MCF 10A (cell line): ENCODE measurements at regions of chr10 and their contacts with region 1.

Region 1: DNA sequence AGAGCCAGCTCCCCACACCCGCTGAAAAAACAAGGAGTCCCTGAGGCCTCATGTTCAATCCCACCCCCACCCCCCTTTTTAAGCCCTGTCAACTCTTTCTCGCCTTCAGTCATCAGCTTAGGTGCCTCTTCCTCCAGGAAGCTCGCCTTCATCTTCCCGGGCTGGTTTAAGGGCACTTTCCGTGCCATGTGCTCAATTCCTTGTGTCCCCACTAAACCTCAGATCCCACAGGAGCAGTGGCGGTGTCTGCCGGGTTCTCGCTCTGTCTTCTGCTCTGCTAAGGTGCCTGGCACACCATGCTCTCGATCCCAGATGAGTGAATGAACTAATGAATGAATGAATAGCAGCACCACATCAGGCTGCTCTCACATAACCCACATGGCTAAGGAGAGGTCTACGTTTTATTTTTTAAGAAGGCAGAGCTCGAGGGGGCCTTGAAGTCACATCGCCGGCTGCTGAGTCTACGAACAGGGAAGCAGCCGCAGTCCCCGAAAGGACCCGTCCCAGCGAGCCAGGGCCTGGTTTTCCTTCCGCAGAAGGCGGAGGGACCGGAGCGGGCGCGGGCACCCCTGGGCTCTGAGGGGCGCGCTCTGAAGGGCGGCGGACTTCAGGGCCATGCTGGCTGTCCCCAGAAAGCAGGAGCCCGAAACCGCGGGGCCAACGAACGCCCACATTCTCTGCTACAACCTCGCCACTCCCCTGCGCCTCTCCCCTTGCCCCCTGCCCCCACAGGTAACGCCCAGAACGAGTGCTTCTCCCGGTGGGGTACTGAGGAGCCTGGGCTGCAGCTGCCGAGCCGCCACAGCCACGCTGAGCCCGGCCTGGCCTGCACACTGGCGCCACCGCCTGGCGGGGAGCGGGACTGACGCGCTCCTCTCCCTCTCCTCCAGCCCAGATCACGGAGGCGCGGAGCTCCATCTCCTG is 73.4 kb upstream of the KCNMA1 start:
- DNase-seq: peak; percentile 57
- H3K4me3 Mint-ChIP-seq: peak overlapping the region; percentile 33
- H3K27ac Mint-ChIP-seq: no peak overlapping the region
- H3K4me1 Mint-ChIP-seq: no peaks in the 10 kb centered on the region
- H3K27me3 Mint-ChIP-seq: no peaks in the 10 kb centered on the region
- CTCF ChIP-seq: peak; percentile 94

Region 2: GRCh38 chr10:77165445-77166208 is 545.4 kb before region 1 on chr10:
- CTCF ChIA-PET with region 1: interaction called, 193 read pairs
- POLR2A ChIA-PET with region 1: interaction called, 9 read pairs
- intact Hi-C with region 1: loop called (anchors 1 kb)
- DNase-seq: peak; percentile 79
- H3K4me3 Mint-ChIP-seq: no peak overlapping the region
- H3K27ac Mint-ChIP-seq: peak overlapping the region; percentile 81
- H3K4me1 Mint-ChIP-seq: peaks cover 37% of the 10 kb centered on the region
- H3K27me3 Mint-ChIP-seq: no peaks in the 10 kb centered on the region
- CTCF ChIP-seq: peak; percentile 77

Region 3: GRCh38 chr10:77251297-77252013 is 459.6 kb before region 1 on chr10:
- CTCF ChIA-PET with region 1: interaction called, 6 read pairs
- POLR2A ChIA-PET with region 1: no interaction called
- intact Hi-C with region 1: loop called (anchors 1 kb)
- DNase-seq: peak; percentile 50
- H3K4me3 Mint-ChIP-seq: no peak overlapping the region
- H3K27ac Mint-ChIP-seq: no peak overlapping the region
- H3K4me1 Mint-ChIP-seq: peaks cover 13% of the 10 kb centered on the region
- H3K27me3 Mint-ChIP-seq: no peaks in the 10 kb centered on the region
- CTCF ChIP-seq: peak; percentile 86

Region 4: DNA sequence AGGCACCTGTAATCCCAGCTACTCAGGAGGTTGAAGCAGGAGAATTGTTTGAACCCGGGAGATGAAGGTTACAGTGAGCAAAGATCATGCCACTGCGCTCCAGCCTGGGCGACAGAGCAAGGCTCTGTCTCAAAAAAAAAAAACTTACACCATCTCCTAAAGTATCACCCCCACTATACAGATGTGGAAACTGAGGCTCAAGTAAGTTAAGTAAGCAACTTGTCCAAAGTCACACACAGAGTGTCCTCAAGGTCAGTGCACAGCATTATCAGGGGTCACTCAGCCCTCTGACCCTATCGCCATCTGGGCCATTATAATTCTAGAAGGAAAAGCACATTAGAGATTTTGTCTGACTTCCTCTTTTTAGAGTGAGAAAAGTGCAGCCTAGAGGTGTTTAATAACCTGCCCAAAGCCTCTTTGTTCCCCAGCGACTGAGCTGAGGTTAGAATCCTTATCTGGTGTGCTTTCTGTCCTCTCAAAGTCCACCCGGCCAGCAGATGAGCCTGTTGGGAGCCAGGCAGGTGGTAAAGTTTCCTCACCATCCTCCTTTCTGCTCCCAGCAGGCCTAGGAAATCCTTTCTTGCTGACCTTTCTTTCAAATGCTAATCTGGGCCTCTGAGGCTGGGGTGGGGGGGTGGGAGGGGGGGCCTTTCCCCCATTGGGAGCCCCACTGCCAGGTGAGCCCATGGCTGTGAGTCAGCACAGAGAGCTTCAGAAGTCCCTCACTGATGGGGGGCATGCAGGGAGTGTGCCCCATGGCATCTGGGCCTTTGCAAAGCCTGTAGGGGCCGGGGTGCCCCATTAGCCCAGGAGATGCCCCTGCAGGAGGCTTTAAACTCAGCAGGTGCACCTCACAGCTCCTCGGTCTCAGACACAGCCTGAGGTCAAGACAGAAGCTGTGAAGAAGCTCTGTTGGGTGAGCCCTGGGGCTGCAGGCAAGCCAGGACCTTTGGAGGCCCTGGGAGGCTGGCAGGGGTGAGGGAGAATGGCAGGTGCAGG is 61.4 kb before region 1 on chr10:
- CTCF ChIA-PET with region 1: interaction called, 26 read pairs
- POLR2A ChIA-PET with region 1: no interaction called
- intact Hi-C with region 1: no loop called
- DNase-seq: no peak
- H3K4me3 Mint-ChIP-seq: no peak overlapping the region
- H3K27ac Mint-ChIP-seq: no peak overlapping the region
- H3K4me1 Mint-ChIP-seq: peaks cover 5% of the 10 kb centered on the region
- H3K27me3 Mint-ChIP-seq: no peaks in the 10 kb centered on the region
- CTCF ChIP-seq: no peak

Region 5: DNA sequence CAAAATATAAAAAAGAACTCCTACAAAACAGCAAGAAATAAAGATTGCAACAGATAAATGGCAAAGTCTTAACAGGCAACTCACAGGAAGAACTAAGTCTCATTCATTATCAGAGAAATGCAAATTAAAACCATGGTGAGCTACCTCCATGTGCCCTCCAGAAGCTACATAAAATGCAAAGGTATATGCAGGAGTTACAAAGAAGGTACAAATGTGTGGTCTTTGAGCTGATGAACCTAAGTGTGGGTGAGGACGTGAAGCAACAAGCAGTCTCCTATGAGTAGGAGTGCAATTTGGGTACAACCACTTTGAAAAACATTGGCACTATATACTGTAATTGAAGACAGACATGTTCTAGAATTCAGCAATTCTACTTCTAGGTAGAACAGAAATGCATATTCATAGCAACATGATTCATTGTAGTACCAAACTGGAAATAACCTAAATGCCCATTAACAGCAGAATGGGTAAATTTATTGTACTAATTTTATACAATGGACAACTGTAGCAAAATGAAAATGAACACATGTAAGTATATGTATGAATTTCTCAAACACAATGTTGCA is 11.9 kb before region 1 on chr10:
- CTCF ChIA-PET with region 1: interaction called, 28 read pairs
- POLR2A ChIA-PET with region 1: interaction called, 6 read pairs
- intact Hi-C with region 1: no loop called
- DNase-seq: no peak
- H3K4me3 Mint-ChIP-seq: no peak overlapping the region
- H3K27ac Mint-ChIP-seq: no peak overlapping the region
- H3K4me1 Mint-ChIP-seq: peaks cover 27% of the 10 kb centered on the region
- H3K27me3 Mint-ChIP-seq: no peaks in the 10 kb centered on the region
- CTCF ChIP-seq: no peak

Region 6: GRCh38 chr10:77746047-77746707 is 35.2 kb after region 1 on chr10:
- CTCF ChIA-PET with region 1: interaction called, 11 read pairs
- POLR2A ChIA-PET with region 1: no interaction called
- intact Hi-C with region 1: no loop called
- DNase-seq: peak; percentile 65
- H3K4me3 Mint-ChIP-seq: no peak overlapping the region
- H3K27ac Mint-ChIP-seq: peak overlapping the region; percentile 84
- H3K4me1 Mint-ChIP-seq: peaks cover 30% of the 10 kb centered on the region
- H3K27me3 Mint-ChIP-seq: no peaks in the 10 kb centered on the region
- CTCF ChIP-seq: no peak

Region 7: GRCh38 chr10:77846718-77847630 is 136.0 kb after region 1 on chr10:
- CTCF ChIA-PET with region 1: no interaction called
- POLR2A ChIA-PET with region 1: no interaction called
- intact Hi-C with region 1: loop called (anchors 10 kb)
- DNase-seq: peak; percentile 79
- H3K4me3 Mint-ChIP-seq: peak overlapping the region; percentile 56
- H3K27ac Mint-ChIP-seq: peak overlapping the region; percentile 78
- H3K4me1 Mint-ChIP-seq: peaks cover 55% of the 10 kb centered on the region
- H3K27me3 Mint-ChIP-seq: no peaks in the 10 kb centered on the region
- CTCF ChIP-seq: peak; percentile 94